ENCODE measurements at regions of chr4 and their contacts with region 1.

Region 1: DNA sequence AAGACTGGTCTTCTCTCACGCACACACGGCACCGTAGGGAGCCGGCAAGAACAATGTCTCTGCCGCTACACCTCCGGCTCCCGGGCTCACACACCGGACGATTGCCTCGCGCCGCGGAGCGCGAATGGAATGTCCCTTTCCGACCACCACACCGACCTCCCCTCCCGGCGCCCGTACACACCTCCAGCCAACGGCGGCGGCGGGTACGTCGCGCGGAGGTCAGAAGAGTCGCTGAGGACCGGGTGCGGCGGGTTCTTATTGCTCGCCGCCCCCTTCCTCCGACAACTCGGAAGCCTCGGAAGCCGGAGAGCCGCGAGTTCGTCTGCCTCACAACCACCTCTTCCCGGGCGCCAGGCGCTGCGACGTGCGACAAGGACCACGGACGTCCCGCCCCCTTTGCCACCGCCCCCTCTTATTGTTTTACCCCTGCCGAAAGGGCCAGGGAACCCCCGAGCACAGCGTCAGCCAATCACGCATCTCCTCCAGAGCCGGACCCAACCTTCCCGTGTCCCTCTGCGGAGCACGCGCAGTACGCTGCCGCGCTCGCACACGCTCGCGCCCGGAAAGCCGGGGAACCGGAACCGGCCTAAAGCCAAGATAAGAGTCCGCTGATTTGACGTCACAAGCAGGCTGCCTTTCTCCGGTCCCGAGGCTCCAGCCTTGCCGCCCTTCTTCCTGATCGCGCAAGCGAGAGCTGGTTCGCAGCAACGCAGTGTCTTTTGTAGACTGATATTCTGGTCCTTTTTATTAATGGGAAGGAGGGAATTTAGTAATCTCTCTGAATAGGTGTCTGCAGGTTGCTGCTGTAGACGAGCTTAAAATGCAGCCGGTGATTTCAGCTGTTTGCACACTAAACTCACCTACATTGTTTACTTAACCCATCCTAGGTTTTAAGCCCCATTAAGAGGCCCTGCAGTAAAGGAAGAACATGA is at the start of gene G3BP2:
- DNase-seq: peak; percentile 99
- H3K4me3 Mint-ChIP-seq: peak within 1 kb of the TSS; percentile 99
- H3K27ac Mint-ChIP-seq: peak within 1 kb of the TSS; percentile 99
- H3K4me1 Mint-ChIP-seq: peaks cover 36% of the 10 kb centered on the region
- H3K27me3 Mint-ChIP-seq: peaks cover 3% of the 10 kb centered on the region
- total RNA-seq, gene G3BP2: 137 to 144 TPM

Region 2: GRCh38 chr4:75142850-75143249 is 530.4 kb before region 1 on chr4:
- CTCF ChIA-PET with region 1: no interaction called
- POLR2A ChIA-PET with region 1: no interaction called
- intact Hi-C with region 1: no loop called
- DNase-seq: no peak
- H3K4me3 Mint-ChIP-seq: no peak overlapping the region
- H3K27ac Mint-ChIP-seq: no peak overlapping the region
- H3K4me1 Mint-ChIP-seq: no peaks in the 10 kb centered on the region
- H3K27me3 Mint-ChIP-seq: no peaks in the 10 kb centered on the region

Region 3: GRCh38 chr4:75598390-75598789 is 74.9 kb before region 1 on chr4:
- CTCF ChIA-PET with region 1: interaction called, 3 read pairs
- POLR2A ChIA-PET with region 1: no interaction called
- intact Hi-C with region 1: loop called (anchors 2 kb)
- DNase-seq: no peak
- H3K4me3 Mint-ChIP-seq: no peak overlapping the region
- H3K27ac Mint-ChIP-seq: peak overlapping the region; percentile 46
- H3K4me1 Mint-ChIP-seq: peaks cover 2% of the 10 kb centered on the region
- H3K27me3 Mint-ChIP-seq: no peaks in the 10 kb centered on the region

Region 4: GRCh38 chr4:75630174-75630936 is 42.9 kb before region 1 on chr4 and contains the start of gene CDKL2:
- CTCF ChIA-PET with region 1: no interaction called
- POLR2A ChIA-PET with region 1: no interaction called
- intact Hi-C with region 1: loop called (anchors 1 kb)
- DNase-seq: peak; percentile 94
- H3K4me3 Mint-ChIP-seq: peak within 1 kb of the TSS; percentile 79
- H3K27ac Mint-ChIP-seq: peak within 1 kb of the TSS; percentile 46
- H3K4me1 Mint-ChIP-seq: peaks cover 6% of the 10 kb centered on the region
- H3K27me3 Mint-ChIP-seq: no peaks in the 10 kb centered on the region
- total RNA-seq, gene CDKL2: 0.97 to 1.1 TPM

Region 5: GRCh38 chr4:75653845-75654503 is 19.3 kb before region 1 on chr4:
- CTCF ChIA-PET with region 1: interaction called, 5 read pairs
- POLR2A ChIA-PET with region 1: interaction called, 6 read pairs
- intact Hi-C with region 1: loop called (anchors 1 kb)
- DNase-seq: no peak
- H3K4me3 Mint-ChIP-seq: no peak overlapping the region
- H3K27ac Mint-ChIP-seq: peak overlapping the region; percentile 82
- H3K4me1 Mint-ChIP-seq: peaks cover 43% of the 10 kb centered on the region
- H3K27me3 Mint-ChIP-seq: no peaks in the 10 kb centered on the region

Region 6: DNA sequence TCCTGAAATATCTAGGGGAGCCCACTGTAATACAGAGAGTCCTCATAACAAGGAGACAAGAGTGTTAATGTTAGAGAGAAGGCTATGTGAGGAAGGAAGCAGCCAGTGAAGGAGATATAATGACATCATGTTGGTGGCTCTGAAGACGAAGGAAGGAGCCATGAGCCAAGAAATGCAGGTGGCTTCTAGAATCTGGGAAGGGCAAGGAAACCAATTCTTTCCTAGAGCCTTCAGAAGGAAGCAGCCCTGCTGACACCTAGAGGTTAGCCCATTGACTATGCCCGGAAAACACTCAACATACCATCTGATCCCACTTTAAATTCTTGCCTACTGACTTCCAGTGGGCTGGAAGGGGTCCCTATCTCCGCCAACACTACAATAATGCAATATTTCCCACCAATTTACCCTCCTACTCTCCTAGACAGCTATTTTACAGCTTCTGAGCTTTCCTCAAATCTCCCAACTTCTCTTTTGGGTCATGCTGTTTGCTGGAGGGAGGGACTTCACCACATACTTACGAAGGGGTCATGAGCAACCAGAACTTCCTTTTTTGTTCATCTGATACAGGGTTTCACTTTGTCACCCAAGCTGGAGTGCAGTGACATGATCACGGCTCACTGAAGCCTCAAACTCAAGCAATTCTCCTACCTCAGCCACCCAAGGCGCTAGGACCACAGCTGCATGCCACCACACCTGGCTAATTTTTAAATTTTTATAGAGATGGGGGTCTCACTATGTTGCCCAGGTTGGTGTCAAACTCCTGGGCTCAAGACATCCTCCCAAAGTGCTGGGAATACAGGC is 25.1 kb after region 1 on chr4:
- CTCF ChIA-PET with region 1: interaction called, 3 read pairs
- POLR2A ChIA-PET with region 1: interaction called, 5 read pairs
- intact Hi-C with region 1: loop called (anchors 1 kb)
- DNase-seq: peak; percentile 48
- H3K4me3 Mint-ChIP-seq: no peak overlapping the region
- H3K27ac Mint-ChIP-seq: peak overlapping the region; percentile 64
- H3K4me1 Mint-ChIP-seq: peaks cover 23% of the 10 kb centered on the region
- H3K27me3 Mint-ChIP-seq: no peaks in the 10 kb centered on the region

Region 7: DNA sequence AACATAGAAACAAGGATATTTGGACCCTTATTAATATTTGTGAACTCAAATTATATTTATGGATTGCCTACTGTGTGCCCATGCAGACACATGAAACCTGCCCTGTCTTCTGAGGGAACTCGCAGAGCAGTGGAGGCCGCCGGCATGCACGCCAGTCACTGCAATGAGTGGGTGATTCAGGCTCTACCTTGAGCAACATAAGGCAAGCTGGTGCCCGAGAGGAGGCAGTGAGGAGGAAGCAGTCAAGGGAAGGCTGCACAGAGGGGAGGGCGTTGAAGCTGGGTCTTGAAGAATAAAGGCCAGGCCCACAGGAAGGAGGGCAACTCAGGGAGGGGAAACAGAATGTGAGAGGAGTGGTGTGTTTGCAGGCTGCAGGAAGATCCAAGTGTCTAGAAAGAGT is 176.2 kb after region 1 on chr4:
- CTCF ChIA-PET with region 1: interaction called, 3 read pairs
- POLR2A ChIA-PET with region 1: no interaction called
- intact Hi-C with region 1: loop called (anchors 5 kb)
- DNase-seq: peak; percentile 12
- H3K4me3 Mint-ChIP-seq: no peak overlapping the region
- H3K27ac Mint-ChIP-seq: no peak overlapping the region
- H3K4me1 Mint-ChIP-seq: peaks cover 14% of the 10 kb centered on the region
- H3K27me3 Mint-ChIP-seq: peaks cover 7% of the 10 kb centered on the region

Region 8: DNA sequence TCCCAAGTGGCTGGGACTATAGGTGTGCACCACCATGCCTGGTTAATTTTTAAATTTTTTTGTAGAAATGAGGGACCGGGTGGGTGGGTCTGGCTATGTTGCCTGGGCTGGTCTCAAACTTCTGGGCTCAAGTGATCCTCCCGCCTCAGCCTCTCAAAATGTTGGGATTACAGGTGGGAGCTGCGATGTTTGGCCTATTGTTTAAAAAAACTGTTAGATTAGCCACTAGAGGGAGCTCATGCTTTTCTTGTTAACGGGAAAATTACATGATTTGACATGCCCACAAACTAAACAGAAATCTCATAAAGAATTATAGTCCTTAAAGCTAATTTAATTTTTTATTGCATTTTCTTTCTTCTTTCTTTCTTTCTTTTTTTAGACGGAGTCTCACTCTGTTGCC is 322.4 kb after region 1 on chr4:
- CTCF ChIA-PET with region 1: no interaction called
- POLR2A ChIA-PET with region 1: no interaction called
- intact Hi-C with region 1: no loop called
- DNase-seq: no peak
- H3K4me3 Mint-ChIP-seq: no peak overlapping the region
- H3K27ac Mint-ChIP-seq: no peak overlapping the region
- H3K4me1 Mint-ChIP-seq: peaks cover 6% of the 10 kb centered on the region
- H3K27me3 Mint-ChIP-seq: peaks cover 3% of the 10 kb centered on the region

Measured in activated CD4-positive, alpha-beta memory T cell treated with anti-CD3 and anti-CD28 coated beads for 36 hours (primary cell).